Esophagus squamous epithelium (tissue), 5 donors: ENCODE measurements at regions of chr4 and their contacts with region 1.

Region 1: GRCh38 chr4:16443504-16444088 is 217.3 kb upstream of the TAPT1 start:
- DNase-seq: no peak
- H3K4me3 ChIP-seq: no peak overlapping the region
- H3K27ac ChIP-seq: no peak overlapping the region
- H3K4me1 ChIP-seq: no peaks in the 10 kb centered on the region
- H3K27me3 ChIP-seq: no peaks in the 10 kb centered on the region
- CTCF ChIP-seq: peak; percentile 23 to 74 (median 57)
- POLR2A ChIP-seq: no peak

Region 2: DNA sequence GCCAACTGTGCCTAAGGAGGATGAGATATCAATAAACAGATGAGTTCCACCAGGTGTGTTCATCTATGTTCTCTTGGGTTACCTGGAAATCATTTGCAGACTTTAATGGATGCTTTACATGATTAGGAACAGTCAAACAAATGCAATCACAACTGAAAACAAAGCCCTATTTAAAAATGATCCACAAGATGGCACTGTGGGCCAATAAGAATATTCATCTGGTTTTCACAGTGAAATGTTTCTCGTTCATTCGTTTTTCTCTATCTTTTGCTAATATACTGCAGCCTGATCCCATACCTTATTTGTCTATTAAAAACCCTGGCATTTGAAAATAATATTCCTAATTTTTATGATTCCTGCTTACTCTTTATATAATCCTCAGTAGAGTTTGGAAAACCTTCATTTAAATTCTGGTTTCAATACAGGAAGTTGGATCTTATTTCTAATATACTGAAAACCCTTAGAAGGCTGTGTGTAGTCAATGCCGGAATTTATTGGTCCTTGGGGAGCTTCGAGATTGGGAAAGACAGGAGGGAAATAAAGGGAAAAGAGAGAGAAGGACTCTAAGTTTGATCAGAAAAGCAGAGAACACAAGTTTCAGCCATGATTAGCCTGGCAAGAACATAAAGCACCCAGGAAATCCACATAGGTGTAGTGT is 153.6 kb before region 1 on chr4:
- intact Hi-C with region 1: loop called (anchors 10 kb)
- DNase-seq: no peak
- H3K4me3 ChIP-seq: no peak overlapping the region
- H3K27ac ChIP-seq: no peak overlapping the region
- H3K4me1 ChIP-seq: peaks cover 0 to 5% (median 0%) of the 10 kb centered on the region in 3 donors
- H3K27me3 ChIP-seq: peaks cover 0 to 6% (median 0%) of the 10 kb centered on the region in 4 donors
- CTCF ChIP-seq: peak in 5 of 6 experiments; percentile 48 to 75 (median 58)
- POLR2A ChIP-seq: no peak

Region 3: GRCh38 chr4:16384576-16384975 is 59.0 kb before region 1 on chr4:
- intact Hi-C with region 1: no loop called
- DNase-seq: no peak
- H3K4me3 ChIP-seq: no peak overlapping the region
- H3K27ac ChIP-seq: no peak overlapping the region
- H3K4me1 ChIP-seq: no peaks in the 10 kb centered on the region
- H3K27me3 ChIP-seq: peaks cover 0 to 15% (median 0%) of the 10 kb centered on the region in 4 donors
- CTCF ChIP-seq: no peak
- POLR2A ChIP-seq: no peak